ENCODE measurements at regions of chr2 and their contacts with region 1.

Region 1: GRCh38 chr2:61426267-61426897 is 44.5 kb downstream of the USP34 start:
- DNase-seq: peak; percentile 54 to 80 (median 73)
- ATAC-seq: peak; percentile 94
- H3K4me3 ChIP-seq: no peak overlapping the region
- H3K4me3 Mint-ChIP-seq: peak overlapping the region in 9 of 10 donors; percentile 16 to 78 (median 58)
- H3K27ac ChIP-seq: peak overlapping the region; percentile 72
- H3K27ac Mint-ChIP-seq: peak overlapping the region; percentile 65 to 99 (median 95)
- H3K4me1 ChIP-seq: peaks cover 11 to 34% of the 10 kb centered on the region in 2 donors
- H3K4me1 Mint-ChIP-seq: peaks cover 46 to 84% (median 71%) of the 10 kb centered on the region in 7 donors
- H3K27me3 ChIP-seq: no peaks in the 10 kb centered on the region
- H3K27me3 Mint-ChIP-seq: no peaks in the 10 kb centered on the region

Region 2: GRCh38 chr2:61340242-61340641 is 86.1 kb before region 1 on chr2:
- CTCF ChIA-PET with region 1: no interaction called
- POLR2A ChIA-PET with region 1: no interaction called
- intact Hi-C with region 1: no loop called
- DNase-seq: no peak
- ATAC-seq: no peak
- H3K4me3 ChIP-seq: no peak overlapping the region
- H3K4me3 Mint-ChIP-seq: no peak overlapping the region
- H3K27ac ChIP-seq: no peak overlapping the region
- H3K27ac Mint-ChIP-seq: no peak overlapping the region
- H3K4me1 ChIP-seq: no peaks in the 10 kb centered on the region
- H3K4me1 Mint-ChIP-seq: peaks cover 0 to 6% (median 0%) of the 10 kb centered on the region in 7 donors
- H3K27me3 ChIP-seq: no peaks in the 10 kb centered on the region
- H3K27me3 Mint-ChIP-seq: no peaks in the 10 kb centered on the region

Region 3: DNA sequence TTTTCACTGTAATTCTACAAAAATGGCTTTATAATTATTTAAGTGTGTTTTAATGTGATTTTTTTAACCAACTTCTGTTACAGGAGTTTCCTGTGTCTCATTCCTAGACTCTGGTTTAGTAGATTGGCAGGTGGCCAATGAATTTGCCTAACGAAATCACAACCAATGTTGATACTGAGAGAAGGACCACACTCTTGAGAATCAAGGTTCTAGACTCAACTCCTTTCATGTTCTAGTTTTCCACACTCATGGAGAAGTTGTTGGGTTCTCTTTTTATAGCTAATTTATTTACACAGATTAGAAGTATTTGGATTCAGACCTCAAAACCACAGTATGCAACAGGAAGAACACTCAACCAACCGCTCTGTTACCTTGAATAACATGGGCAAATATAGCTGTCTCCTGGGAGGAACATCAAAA is 67.2 kb after region 1 on chr2:
- CTCF ChIA-PET with region 1: interaction called, 6 read pairs
- POLR2A ChIA-PET with region 1: no interaction called
- intact Hi-C with region 1: loop called in 1 of 2 experiments (anchors 1 kb)
- DNase-seq: peak in 5 of 9 donors; percentile 14 to 38 (median 26)
- ATAC-seq: peak; percentile 48
- H3K4me3 ChIP-seq: no peak overlapping the region
- H3K4me3 Mint-ChIP-seq: peak overlapping the region in 8 of 10 donors; percentile 42 to 64 (median 58)
- H3K27ac ChIP-seq: peak overlapping the region; percentile 49
- H3K27ac Mint-ChIP-seq: peak overlapping the region; percentile 53 to 92 (median 77)
- H3K4me1 ChIP-seq: peaks cover 12 to 14% of the 10 kb centered on the region in 2 donors
- H3K4me1 Mint-ChIP-seq: peaks cover 11 to 29% (median 24%) of the 10 kb centered on the region in 7 donors
- H3K27me3 ChIP-seq: no peaks in the 10 kb centered on the region
- H3K27me3 Mint-ChIP-seq: no peaks in the 10 kb centered on the region

Region 4: GRCh38 chr2:61633250-61633649 is 206.9 kb after region 1 on chr2:
- CTCF ChIA-PET with region 1: interaction called, 4 read pairs
- POLR2A ChIA-PET with region 1: no interaction called
- intact Hi-C with region 1: loop called in 1 of 2 experiments (anchors 1 kb)
- DNase-seq: no peak
- ATAC-seq: no peak
- H3K4me3 ChIP-seq: no peak overlapping the region
- H3K4me3 Mint-ChIP-seq: no peak overlapping the region
- H3K27ac ChIP-seq: no peak overlapping the region
- H3K27ac Mint-ChIP-seq: peak overlapping the region in 1 of 9 donors; percentile 10
- H3K4me1 ChIP-seq: no peaks in the 10 kb centered on the region
- H3K4me1 Mint-ChIP-seq: no peaks in the 10 kb centered on the region
- H3K27me3 ChIP-seq: no peaks in the 10 kb centered on the region
- H3K27me3 Mint-ChIP-seq: peaks cover 0 to 3% (median 0%) of the 10 kb centered on the region in 5 donors

Region 5: DNA sequence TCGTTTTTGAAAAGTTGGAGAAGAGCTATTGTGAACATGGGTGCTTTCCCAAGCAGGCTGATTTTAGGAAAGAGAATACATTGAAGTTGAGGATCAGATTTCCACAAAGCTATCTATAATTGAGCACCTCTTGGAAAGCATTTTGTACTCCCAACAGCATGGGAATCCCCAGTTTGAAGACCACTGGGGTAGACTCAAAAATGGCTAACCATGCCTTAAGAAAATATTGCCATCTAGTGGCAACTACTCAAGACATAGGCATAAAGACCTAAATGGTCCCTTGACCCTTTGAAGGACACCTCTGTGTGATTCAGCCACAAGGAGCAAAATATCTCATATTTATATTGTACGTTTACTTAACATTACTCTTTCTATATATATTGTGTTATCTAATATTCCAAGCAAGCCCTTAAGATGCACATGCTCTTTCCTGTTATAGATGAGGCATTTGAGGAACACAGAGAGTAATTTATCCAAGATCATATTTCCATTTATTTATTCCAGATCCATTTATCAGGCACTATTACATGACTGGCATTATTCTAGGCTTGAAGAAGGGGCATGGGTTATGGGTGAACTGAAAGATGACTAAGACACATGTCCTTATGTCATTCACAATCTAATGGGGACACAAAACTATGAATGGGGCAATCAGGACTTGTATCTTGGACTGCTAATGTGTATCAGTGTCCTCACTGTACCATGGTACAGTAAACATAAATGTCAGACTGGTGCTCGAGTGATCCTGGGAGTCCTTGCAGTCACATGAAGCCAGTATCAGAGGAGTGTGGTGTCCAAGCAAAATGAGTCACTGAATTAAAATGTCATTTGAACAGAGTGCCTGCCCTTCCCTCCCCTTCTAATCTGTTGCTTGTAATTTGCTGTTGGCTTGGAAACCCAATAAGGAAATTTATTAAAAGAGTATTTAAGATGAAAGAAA is 232.7 kb after region 1 on chr2:
- CTCF ChIA-PET with region 1: interaction called, 13 read pairs
- POLR2A ChIA-PET with region 1: no interaction called
- intact Hi-C with region 1: loop called (anchors 1 to 10 kb)
- DNase-seq: peak in 1 of 9 donors; percentile 9
- ATAC-seq: no peak
- H3K4me3 ChIP-seq: no peak overlapping the region
- H3K4me3 Mint-ChIP-seq: no peak overlapping the region
- H3K27ac ChIP-seq: no peak overlapping the region
- H3K27ac Mint-ChIP-seq: no peak overlapping the region
- H3K4me1 ChIP-seq: peaks cover 0 to 19% of the 10 kb centered on the region in 2 donors
- H3K4me1 Mint-ChIP-seq: peaks cover 0 to 5% (median 0%) of the 10 kb centered on the region in 7 donors
- H3K27me3 ChIP-seq: no peaks in the 10 kb centered on the region
- H3K27me3 Mint-ChIP-seq: peaks cover 0 to 5% (median 0%) of the 10 kb centered on the region in 5 donors

Region 6: GRCh38 chr2:61789807-61790602 is 363.6 kb after region 1 on chr2:
- CTCF ChIA-PET with region 1: no interaction called
- POLR2A ChIA-PET with region 1: no interaction called
- intact Hi-C with region 1: loop called in 1 of 2 experiments (anchors 1 kb)
- DNase-seq: no peak
- ATAC-seq: no peak
- H3K4me3 ChIP-seq: no peak overlapping the region
- H3K4me3 Mint-ChIP-seq: no peak overlapping the region
- H3K27ac ChIP-seq: no peak overlapping the region
- H3K27ac Mint-ChIP-seq: no peak overlapping the region
- H3K4me1 ChIP-seq: no peaks in the 10 kb centered on the region
- H3K4me1 Mint-ChIP-seq: peaks cover 0 to 8% (median 4%) of the 10 kb centered on the region in 7 donors
- H3K27me3 ChIP-seq: no peaks in the 10 kb centered on the region
- H3K27me3 Mint-ChIP-seq: peaks cover 3 to 17% (median 7%) of the 10 kb centered on the region in 5 donors

Region 7: DNA sequence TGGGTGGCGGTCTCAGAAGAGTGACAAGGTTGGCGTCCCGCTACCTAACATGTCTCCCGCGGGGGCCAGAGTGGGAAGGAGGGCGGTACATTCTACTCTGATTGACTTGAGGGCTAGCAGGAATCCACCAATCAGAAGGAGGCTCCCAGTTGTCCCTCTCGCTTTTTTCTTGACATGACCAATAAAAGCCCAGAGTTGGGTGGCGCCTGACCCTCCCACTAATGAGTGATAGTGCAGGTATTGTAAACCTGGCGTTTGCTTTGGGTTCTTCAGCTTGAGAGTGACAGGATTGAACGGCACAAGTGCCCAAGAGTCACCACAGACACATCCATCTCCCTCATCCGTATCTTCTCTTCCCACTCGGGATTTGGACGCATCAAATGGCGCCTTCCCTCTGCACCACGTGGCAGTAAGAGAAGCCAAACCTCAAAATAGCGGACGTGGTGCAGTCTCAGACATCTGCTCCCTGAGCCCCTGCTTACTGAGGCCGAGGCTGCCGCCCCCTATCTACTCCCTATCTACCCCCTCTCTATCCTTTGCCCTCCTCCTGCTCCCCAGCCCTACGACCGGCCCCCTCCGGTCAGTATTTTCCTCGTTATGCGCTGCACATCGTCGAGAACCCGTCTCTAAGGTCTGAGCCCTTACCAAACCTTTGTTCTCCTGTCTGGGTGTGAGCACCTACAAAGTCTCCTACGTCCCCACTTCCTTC is 428.2 kb after region 1 on chr2:
- CTCF ChIA-PET with region 1: no interaction called
- POLR2A ChIA-PET with region 1: no interaction called
- intact Hi-C with region 1: loop called in 1 of 2 experiments (anchors 5 kb)
- DNase-seq: peak; percentile 61 to 96 (median 94)
- ATAC-seq: peak; percentile 95
- H3K4me3 ChIP-seq: peak overlapping the region; percentile 100
- H3K4me3 Mint-ChIP-seq: peak overlapping the region; percentile 92 to 99 (median 96)
- H3K27ac ChIP-seq: peak overlapping the region; percentile 77
- H3K27ac Mint-ChIP-seq: peak overlapping the region; percentile 90 to 98 (median 95)
- H3K4me1 ChIP-seq: peaks cover 4 to 6% of the 10 kb centered on the region in 2 donors
- H3K4me1 Mint-ChIP-seq: peaks cover 10 to 27% (median 17%) of the 10 kb centered on the region in 7 donors
- H3K27me3 ChIP-seq: no peaks in the 10 kb centered on the region
- H3K27me3 Mint-ChIP-seq: no peaks in the 10 kb centered on the region

Region 8: DNA sequence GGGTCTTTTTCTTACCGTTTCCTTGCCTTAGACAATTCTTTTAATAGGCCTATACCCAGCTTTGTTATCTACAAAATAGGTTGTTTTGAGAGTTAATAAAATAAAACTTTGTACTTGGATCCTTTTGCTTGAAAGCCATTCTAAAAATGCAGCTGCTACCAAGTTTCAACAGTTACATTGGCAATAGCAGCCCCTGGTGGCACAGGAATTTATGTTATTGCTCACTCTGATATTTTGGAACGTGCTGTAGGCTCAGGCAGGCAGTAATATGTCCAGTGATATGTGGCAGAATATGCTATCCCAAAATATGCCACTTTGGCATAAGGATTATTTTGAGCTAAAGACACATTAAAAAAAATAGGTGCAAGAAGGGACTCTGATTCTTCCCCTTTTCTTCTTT is 472.4 kb after region 1 on chr2:
- CTCF ChIA-PET with region 1: no interaction called
- POLR2A ChIA-PET with region 1: no interaction called
- intact Hi-C with region 1: loop called in 1 of 2 experiments (anchors 2 kb)
- DNase-seq: peak in 1 of 9 donors; percentile 13
- ATAC-seq: peak; percentile 40
- H3K4me3 ChIP-seq: no peak overlapping the region
- H3K4me3 Mint-ChIP-seq: no peak overlapping the region
- H3K27ac ChIP-seq: no peak overlapping the region
- H3K27ac Mint-ChIP-seq: no peak overlapping the region
- H3K4me1 ChIP-seq: no peaks in the 10 kb centered on the region
- H3K4me1 Mint-ChIP-seq: peaks cover 0 to 2% (median 0%) of the 10 kb centered on the region in 7 donors
- H3K27me3 ChIP-seq: no peaks in the 10 kb centered on the region
- H3K27me3 Mint-ChIP-seq: peaks cover 0 to 4% (median 0%) of the 10 kb centered on the region in 5 donors